ENCODE measurements at regions of chr3 and their contacts with region 1.

Region 1: GRCh38 chr3:31448035-31448881 is 84.5 kb upstream of the STT3B start:
- DNase-seq: peak; percentile 15 to 36 (median 29)
- H3K4me3 ChIP-seq: no peak overlapping the region
- H3K4me3 Mint-ChIP-seq: peak overlapping the region in 3 of 8 donors; percentile 3 to 66 (median 42)
- H3K27ac ChIP-seq: no peak overlapping the region
- H3K27ac Mint-ChIP-seq: no peak overlapping the region
- H3K4me1 ChIP-seq: peaks cover 17% of the 10 kb centered on the region
- H3K4me1 Mint-ChIP-seq: peaks cover 11 to 22% (median 16%) of the 10 kb centered on the region in 4 donors
- H3K27me3 ChIP-seq: no peaks in the 10 kb centered on the region
- H3K27me3 Mint-ChIP-seq: peaks cover 0 to 1% of the 10 kb centered on the region in 2 donors

Region 2: DNA sequence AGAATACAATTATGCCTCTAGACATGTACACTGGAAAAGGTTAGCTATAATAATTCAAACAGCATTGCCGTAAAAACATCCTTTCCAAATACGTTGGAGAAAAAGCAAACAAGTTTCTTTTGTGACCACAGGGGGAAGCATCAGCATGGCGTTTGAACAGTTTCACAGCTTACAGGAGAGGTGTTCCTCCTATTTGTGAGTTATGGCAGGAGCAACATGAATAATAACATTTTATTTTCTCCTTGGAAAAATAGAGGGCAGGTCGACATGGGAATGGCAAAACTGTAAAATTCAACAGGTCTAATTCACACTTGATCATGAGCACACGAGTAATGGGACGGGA is 514.1 kb before region 1 on chr3:
- CTCF ChIA-PET with region 1: interaction called, 4 read pairs
- POLR2A ChIA-PET with region 1: no interaction called
- intact Hi-C with region 1: loop called (anchors 1 kb)
- DNase-seq: peak in 4 of 5 donors; percentile 3 to 9 (median 5)
- H3K4me3 ChIP-seq: no peak overlapping the region
- H3K4me3 Mint-ChIP-seq: peak overlapping the region in 2 of 8 donors; percentile 2 to 23
- H3K27ac ChIP-seq: no peak overlapping the region
- H3K27ac Mint-ChIP-seq: peak overlapping the region in 2 of 7 donors; percentile 48 to 76
- H3K4me1 ChIP-seq: peaks cover 3% of the 10 kb centered on the region
- H3K4me1 Mint-ChIP-seq: peaks cover 0 to 8% (median 5%) of the 10 kb centered on the region in 4 donors
- H3K27me3 ChIP-seq: no peaks in the 10 kb centered on the region
- H3K27me3 Mint-ChIP-seq: no peaks in the 10 kb centered on the region

Region 3: DNA sequence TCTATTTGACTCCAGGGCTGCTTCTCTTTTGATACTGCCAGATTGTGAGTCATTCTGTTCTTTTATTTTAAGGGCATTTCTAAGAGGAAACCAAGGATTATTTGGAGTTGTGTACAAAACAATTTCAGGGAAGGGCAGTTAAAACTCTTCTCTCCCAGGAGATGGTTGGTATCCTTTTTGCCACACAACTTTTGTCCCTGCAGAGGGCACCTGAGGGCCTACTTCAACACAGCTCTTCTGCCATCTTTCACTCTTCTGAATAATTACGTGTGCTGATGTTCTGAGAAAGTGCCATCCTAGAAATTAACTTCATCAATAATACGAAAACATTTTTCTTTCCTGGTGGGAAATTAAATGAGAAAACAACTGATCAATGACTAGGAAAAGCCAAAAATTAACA is 478.1 kb before region 1 on chr3:
- CTCF ChIA-PET with region 1: interaction called, 3 read pairs
- POLR2A ChIA-PET with region 1: no interaction called
- intact Hi-C with region 1: loop called (anchors 1 kb)
- DNase-seq: peak in 4 of 5 donors; percentile 6 to 23 (median 20)
- H3K4me3 ChIP-seq: no peak overlapping the region
- H3K4me3 Mint-ChIP-seq: no peak overlapping the region
- H3K27ac ChIP-seq: no peak overlapping the region
- H3K27ac Mint-ChIP-seq: no peak overlapping the region
- H3K4me1 ChIP-seq: no peaks in the 10 kb centered on the region
- H3K4me1 Mint-ChIP-seq: peaks cover 2 to 7% (median 5%) of the 10 kb centered on the region in 4 donors
- H3K27me3 ChIP-seq: no peaks in the 10 kb centered on the region
- H3K27me3 Mint-ChIP-seq: peaks cover 2 to 5% of the 10 kb centered on the region in 2 donors

Region 4: GRCh38 chr3:31505371-31506048 is 57.3 kb after region 1 on chr3:
- CTCF ChIA-PET with region 1: no interaction called
- POLR2A ChIA-PET with region 1: no interaction called
- intact Hi-C with region 1: no loop called
- DNase-seq: no peak
- H3K4me3 ChIP-seq: no peak overlapping the region
- H3K4me3 Mint-ChIP-seq: peak overlapping the region in 6 of 8 donors; percentile 10 to 53 (median 48)
- H3K27ac ChIP-seq: no peak overlapping the region
- H3K27ac Mint-ChIP-seq: peak overlapping the region in 2 of 7 donors; percentile 7 to 60
- H3K4me1 ChIP-seq: peaks cover 61% of the 10 kb centered on the region
- H3K4me1 Mint-ChIP-seq: peaks cover 48 to 71% (median 54%) of the 10 kb centered on the region in 4 donors
- H3K27me3 ChIP-seq: no peaks in the 10 kb centered on the region
- H3K27me3 Mint-ChIP-seq: no peaks in the 10 kb centered on the region